ENCODE measurements at regions of chr6 and their contacts with region 1.

Region 1: GRCh38 chr6:152705327-152705726 is 7.6 kb downstream of the MYCT1 start:
- DNase-seq: no peak
- H3K4me3 Mint-ChIP-seq: no peak overlapping the region
- H3K27ac Mint-ChIP-seq: no peak overlapping the region
- H3K4me1 Mint-ChIP-seq: no peaks in the 10 kb centered on the region
- H3K27me3 Mint-ChIP-seq: peaks cover 13% of the 10 kb centered on the region
- CTCF ChIP-seq: no peak

Region 2: GRCh38 chr6:152716322-152716721 is 11.0 kb after region 1 on chr6:
- CTCF ChIA-PET with region 1: interaction called, 10 read pairs
- POLR2A ChIA-PET with region 1: no interaction called
- intact Hi-C with region 1: no loop called
- DNase-seq: no peak
- H3K4me3 Mint-ChIP-seq: no peak overlapping the region
- H3K27ac Mint-ChIP-seq: no peak overlapping the region
- H3K4me1 Mint-ChIP-seq: peaks cover 7% of the 10 kb centered on the region
- H3K27me3 Mint-ChIP-seq: peaks cover 11% of the 10 kb centered on the region
- CTCF ChIP-seq: peak; percentile 23

Region 3: DNA sequence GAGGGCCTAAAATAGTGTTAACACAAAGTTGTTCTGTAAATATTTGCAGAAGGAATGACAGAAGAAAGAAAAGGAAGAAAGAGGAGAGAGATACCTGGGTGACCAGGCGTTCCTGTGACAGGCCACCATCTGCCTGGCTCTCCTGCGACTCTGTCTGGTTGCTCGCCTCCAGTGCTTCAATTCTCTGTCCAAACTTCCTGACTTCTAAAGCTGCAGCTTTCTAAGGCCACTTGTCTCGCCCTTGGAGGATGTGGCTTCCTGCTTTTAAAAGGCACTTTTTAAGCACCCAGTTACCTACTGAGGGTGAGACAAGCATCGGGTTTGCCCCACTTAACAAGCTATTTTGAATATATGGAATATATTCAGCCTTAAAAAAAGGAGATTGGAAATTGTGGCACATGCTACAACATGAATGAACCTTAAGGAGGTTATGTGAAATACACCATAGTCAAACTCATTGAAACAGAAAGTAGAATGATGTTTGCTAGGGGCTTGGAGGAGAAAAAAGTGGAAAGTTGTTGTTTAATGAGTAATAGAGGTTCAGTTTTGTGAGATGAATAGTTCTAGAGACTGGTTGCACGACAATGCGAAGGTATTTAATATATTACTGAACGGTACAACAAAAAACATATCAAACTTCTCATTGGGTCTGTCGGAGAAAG is 78.0 kb after region 1 on chr6:
- CTCF ChIA-PET with region 1: no interaction called
- POLR2A ChIA-PET with region 1: no interaction called
- intact Hi-C with region 1: no loop called
- DNase-seq: no peak
- H3K4me3 Mint-ChIP-seq: no peak overlapping the region
- H3K27ac Mint-ChIP-seq: no peak overlapping the region
- H3K4me1 Mint-ChIP-seq: no peaks in the 10 kb centered on the region
- H3K27me3 Mint-ChIP-seq: peaks cover 55% of the 10 kb centered on the region
- CTCF ChIP-seq: no peak